K562 (cell line): ENCODE measurements at regions of chr7 and their contacts with region 1.

Region 1: GRCh38 chr7:7424151-7424873 is 111.4 kb downstream of the COL28A1 start:
- DNase-seq: peak; percentile 21 to 76 (median 40)
- ATAC-seq: peak; percentile 97
- H3K4me3 ChIP-seq: peak overlapping the region; percentile 34
- H3K27ac ChIP-seq: no peak overlapping the region
- H3K4me1 ChIP-seq: peaks cover 0 to 5% of the 10 kb centered on the region in 2 experiments; a peak in 2 of 5 replicates
- H3K27me3 ChIP-seq: peaks cover 0 to 6% of the 10 kb centered on the region in 2 experiments; a peak in 4 of 5 replicates
- CTCF ChIP-seq: peak; percentile 71 to 87 (median 86)
- EP300 ChIP-seq: no peak
- POLR2A ChIP-seq: no peak
- RAD21 ChIP-seq: peak; percentile 83 to 90

Region 2: DNA sequence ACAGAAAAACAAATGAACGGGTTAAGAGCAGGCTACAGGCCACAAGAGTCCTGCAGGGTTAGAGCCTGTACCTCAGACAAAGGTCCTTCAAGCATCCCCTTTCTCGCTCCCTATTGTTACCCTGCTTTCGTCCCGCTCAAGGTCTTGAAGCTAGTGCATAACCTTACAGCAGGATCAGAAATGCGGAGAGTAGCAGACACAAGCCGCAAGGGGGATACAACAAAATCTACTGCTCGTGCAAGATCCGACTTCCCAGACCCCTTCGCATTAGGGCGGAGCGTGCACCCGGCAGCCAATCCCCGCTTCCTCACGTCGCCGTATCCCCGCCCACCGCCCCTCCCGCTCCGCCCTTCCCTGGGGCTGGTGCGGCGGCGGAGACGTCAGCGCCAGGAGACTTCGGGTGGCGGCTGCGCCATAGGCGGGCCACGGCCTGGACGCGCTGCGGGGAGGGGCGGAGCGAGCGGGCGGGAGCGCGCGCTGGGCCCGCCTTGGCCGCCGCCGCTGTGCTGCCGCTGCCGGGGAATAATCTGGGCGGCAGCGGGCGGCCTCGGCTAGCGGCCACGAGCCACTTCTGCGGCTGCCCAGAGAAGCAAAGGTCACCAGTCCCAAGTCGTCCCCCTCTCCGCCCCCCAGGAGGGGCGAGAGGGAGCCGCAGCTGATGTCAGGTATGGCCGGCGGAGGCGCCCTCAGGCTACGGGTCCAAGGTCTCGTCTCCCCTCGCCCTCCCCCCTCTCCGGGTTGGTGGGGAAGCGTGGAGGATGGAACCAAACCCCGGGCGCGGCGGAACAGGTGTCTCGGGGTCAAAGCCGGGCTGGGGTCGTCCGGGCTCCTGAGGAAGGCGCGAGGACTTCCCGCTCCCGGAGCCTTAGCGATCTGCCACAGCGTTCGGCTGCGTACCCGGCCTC is 241.9 kb before region 1 on chr7 and contains the start of gene C1GALT1:
- CTCF ChIA-PET with region 1: no interaction called
- POLR2A ChIA-PET with region 1: no interaction called
- in situ Hi-C with region 1: no loop called
- intact Hi-C with region 1: loop called (anchors 5 kb)
- DNase-seq: peak; percentile 96 to 98 (median 96)
- ATAC-seq: peak; percentile 92
- H3K4me3 ChIP-seq: peak within 1 kb of the TSS; percentile 87
- H3K27ac ChIP-seq: peak within 1 kb of the TSS; percentile 95
- H3K4me1 ChIP-seq: peaks cover 7 to 11% of the 10 kb centered on the region in 2 experiments; a peak in 3 of 5 replicates
- H3K27me3 ChIP-seq: no peaks in the 10 kb centered on the region
- CTCF ChIP-seq: peak; percentile 32 to 64 (median 43)
- EP300 ChIP-seq: no peak
- POLR2A ChIP-seq: peak; percentile 94
- RAD21 ChIP-seq: peak; percentile 29 to 41; a peak in 3 of 4 replicates
- polyA plus RNA-seq, gene C1GALT1: 5.0 to 6.4 TPM

Region 3: GRCh38 chr7:7535691-7536090 is 111.4 kb after region 1 on chr7 and contains the start of gene COL28A1:
- CTCF ChIA-PET with region 1: interaction called, 25 read pairs
- POLR2A ChIA-PET with region 1: no interaction called
- in situ Hi-C with region 1: loop called (anchors 5 kb)
- intact Hi-C with region 1: loop called (anchors 5 kb)
- DNase-seq: no peak
- ATAC-seq: no peak
- H3K4me3 ChIP-seq: no peak within 1 kb of the TSS
- H3K27ac ChIP-seq: no peak within 1 kb of the TSS
- H3K4me1 ChIP-seq: no peaks in the 10 kb centered on the region
- H3K27me3 ChIP-seq: 0 out of 5 replicates have a peak, but pooled peaks cover 0 to 2% of the 10 kb centered on the region in 2 experiments
- CTCF ChIP-seq: no peak
- EP300 ChIP-seq: no peak
- POLR2A ChIP-seq: no peak
- RAD21 ChIP-seq: no peak
- polyA plus RNA-seq, gene COL28A1: 0.03 TPM in 1 of 2 experiments, not detected in the other

Region 4: GRCh38 chr7:7542251-7542835 is 118.0 kb after region 1 on chr7:
- CTCF ChIA-PET with region 1: interaction called, 25 read pairs
- POLR2A ChIA-PET with region 1: no interaction called
- in situ Hi-C with region 1: loop called (anchors 5 kb)
- intact Hi-C with region 1: loop called (anchors 5 kb)
- DNase-seq: no peak
- ATAC-seq: no peak
- H3K4me3 ChIP-seq: no peak overlapping the region
- H3K27ac ChIP-seq: no peak overlapping the region
- H3K4me1 ChIP-seq: no peaks in the 10 kb centered on the region
- H3K27me3 ChIP-seq: no peaks in the 10 kb centered on the region
- CTCF ChIP-seq: no peak
- EP300 ChIP-seq: no peak
- POLR2A ChIP-seq: no peak
- RAD21 ChIP-seq: no peak

Region 5: DNA sequence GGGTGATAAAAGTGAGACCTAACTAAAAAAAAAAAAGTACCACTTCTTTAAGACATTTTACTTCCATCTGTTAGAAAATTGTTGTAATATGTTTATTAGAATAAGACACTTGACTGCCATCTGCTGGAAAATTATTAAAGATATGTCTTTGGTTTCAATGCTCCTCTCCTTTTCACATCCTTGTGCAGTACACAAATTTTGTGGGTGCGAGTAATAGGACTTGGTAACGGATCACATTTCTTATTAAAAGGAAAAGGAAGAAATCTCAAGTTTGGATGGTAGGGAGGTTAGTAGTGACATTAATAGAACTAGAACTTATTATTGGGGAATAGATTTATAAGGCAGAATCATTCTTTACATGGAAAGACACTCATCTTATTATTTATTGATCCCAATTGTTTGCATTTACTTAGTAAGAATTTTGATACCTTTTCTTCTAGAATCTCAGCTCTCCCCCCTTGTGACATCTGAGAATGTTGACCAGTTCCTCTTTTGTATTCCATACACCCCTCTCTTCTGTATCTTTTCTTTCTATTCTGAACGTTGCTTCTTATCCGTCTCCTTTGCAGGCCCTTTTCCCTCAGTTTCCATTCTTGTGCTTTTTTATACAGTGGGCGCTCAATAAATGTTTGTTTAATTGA is 337.1 kb after region 1 on chr7:
- CTCF ChIA-PET with region 1: no interaction called
- POLR2A ChIA-PET with region 1: no interaction called
- in situ Hi-C with region 1: no loop called
- intact Hi-C with region 1: loop called (anchors 5 kb)
- DNase-seq: peak in 3 of 4 experiments; percentile 8 to 31 (median 10)
- ATAC-seq: peak; percentile 69; the same call in 2 of the 3 replicates
- H3K4me3 ChIP-seq: no peak overlapping the region
- H3K27ac ChIP-seq: no peak overlapping the region
- H3K4me1 ChIP-seq: no peaks in the 10 kb centered on the region; a peak in 1 of 5 replicates
- H3K27me3 ChIP-seq: no peaks in the 10 kb centered on the region
- CTCF ChIP-seq: peak in 1 of 3 experiments; percentile 42; a peak in 3 of 6 replicates
- EP300 ChIP-seq: no peak
- POLR2A ChIP-seq: no peak
- RAD21 ChIP-seq: peak; percentile 18 to 40; a peak in 2 of 4 replicates

Region 6: GRCh38 chr7:8217200-8218068 is 793.1 kb after region 1 on chr7:
- CTCF ChIA-PET with region 1: interaction called, 5 read pairs
- POLR2A ChIA-PET with region 1: no interaction called
- in situ Hi-C with region 1: loop called (anchors 5 kb)
- intact Hi-C with region 1: loop called (anchors 2 kb)
- DNase-seq: peak; percentile 38 to 74 (median 39)
- ATAC-seq: peak; percentile 70
- H3K4me3 ChIP-seq: no peak overlapping the region
- H3K27ac ChIP-seq: no peak overlapping the region
- H3K4me1 ChIP-seq: no peaks in the 10 kb centered on the region
- H3K27me3 ChIP-seq: no peaks in the 10 kb centered on the region
- CTCF ChIP-seq: peak; percentile 35 to 74 (median 53); a peak in 4 of 6 replicates
- EP300 ChIP-seq: no peak
- POLR2A ChIP-seq: no peak
- RAD21 ChIP-seq: peak; percentile 85 to 86

Region 7: GRCh38 chr7:8365503-8366110 is 941.3 kb after region 1 on chr7:
- CTCF ChIA-PET with region 1: interaction called, 3 read pairs
- POLR2A ChIA-PET with region 1: no interaction called
- in situ Hi-C with region 1: no loop called
- intact Hi-C with region 1: loop called (anchors 2 kb)
- DNase-seq: peak in 3 of 4 experiments; percentile 18 to 65 (median 22)
- ATAC-seq: peak; percentile 92
- H3K4me3 ChIP-seq: no peak overlapping the region
- H3K27ac ChIP-seq: no peak overlapping the region
- H3K4me1 ChIP-seq: no peaks in the 10 kb centered on the region
- H3K27me3 ChIP-seq: no peaks in the 10 kb centered on the region
- CTCF ChIP-seq: peak; percentile 59 to 67 (median 61)
- EP300 ChIP-seq: no peak
- POLR2A ChIP-seq: no peak
- RAD21 ChIP-seq: peak; percentile 47 to 76; a peak in 3 of 4 replicates